Mammary epithelial cell (primary cell): ENCODE measurements at regions of chr16 and their contacts with region 1.

Region 1: GRCh38 chr16:28110479-28110878 is 47.0 kb upstream of the GSG1L start:
- DNase-seq: no peak
- H3K4me3 ChIP-seq: no peak overlapping the region
- H3K27ac ChIP-seq: no peak overlapping the region
- H3K4me1 ChIP-seq: peaks cover 18% of the 10 kb centered on the region
- H3K27me3 ChIP-seq: no peaks in the 10 kb centered on the region
- CTCF ChIP-seq: no peak

Region 2: DNA sequence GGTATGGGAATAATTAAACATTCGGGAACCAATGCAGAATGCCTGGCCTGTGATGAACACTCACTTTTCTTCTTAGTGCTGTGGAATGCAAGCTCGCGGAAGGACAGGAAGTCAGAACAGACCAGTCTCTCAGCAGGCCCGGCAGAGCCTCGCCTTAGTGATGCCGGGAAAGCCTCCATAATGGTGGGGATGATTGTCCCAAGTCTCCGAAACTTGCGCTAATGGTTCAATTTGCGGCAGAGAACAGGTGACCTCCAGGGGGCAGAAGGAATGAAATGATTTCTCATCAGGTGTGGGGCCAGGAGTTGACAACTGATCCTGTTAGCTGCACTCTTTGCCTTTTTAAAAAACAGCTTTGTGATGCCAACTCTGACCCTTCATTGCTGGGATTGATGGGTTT is 217.6 kb before region 1 on chr16:
- CTCF ChIA-PET with region 1: no interaction called
- dilution Hi-C with region 1: no loop called
- in situ Hi-C with region 1: no loop called
- intact Hi-C with region 1: no loop called
- DNase-seq: no peak
- H3K4me3 ChIP-seq: no peak overlapping the region
- H3K27ac ChIP-seq: no peak overlapping the region
- H3K4me1 ChIP-seq: no peaks in the 10 kb centered on the region
- H3K27me3 ChIP-seq: peaks cover under 1% of the 10 kb centered on the region
- CTCF ChIP-seq: no peak

Region 3: GRCh38 chr16:28063641-28064061 is 46.8 kb before region 1 on chr16 and contains the start of gene GSG1L:
- CTCF ChIA-PET with region 1: no interaction called
- dilution Hi-C with region 1: no loop called
- in situ Hi-C with region 1: no loop called
- intact Hi-C with region 1: no loop called
- DNase-seq: no peak
- H3K4me3 ChIP-seq: no peak within 1 kb of the TSS
- H3K27ac ChIP-seq: no peak within 1 kb of the TSS
- H3K4me1 ChIP-seq: no peaks in the 10 kb centered on the region
- H3K27me3 ChIP-seq: peaks cover 31% of the 10 kb centered on the region
- CTCF ChIP-seq: no peak
- total RNA-seq, gene GSG1L: not detected

Region 4: GRCh38 chr16:28211712-28212534 is 101.4 kb after region 1 on chr16 and contains the start of gene XPO6:
- CTCF ChIA-PET with region 1: no interaction called
- dilution Hi-C with region 1: no loop called
- in situ Hi-C with region 1: loop called in 1 of 2 experiments (anchors 25 kb)
- intact Hi-C with region 1: no loop called
- DNase-seq: peak; percentile 90
- H3K4me3 ChIP-seq: peak within 1 kb of the TSS; percentile 75 to 83 (median 77)
- H3K27ac ChIP-seq: peak within 1 kb of the TSS; percentile 74
- H3K4me1 ChIP-seq: peaks cover 14% of the 10 kb centered on the region
- H3K27me3 ChIP-seq: no peaks in the 10 kb centered on the region
- CTCF ChIP-seq: no peak
- total RNA-seq, gene XPO6: 81.0 to 166 TPM